Endothelial cell of umbilical vein (primary cell): ENCODE measurements at regions of chr10 and their contacts with region 1.

Region 1: DNA sequence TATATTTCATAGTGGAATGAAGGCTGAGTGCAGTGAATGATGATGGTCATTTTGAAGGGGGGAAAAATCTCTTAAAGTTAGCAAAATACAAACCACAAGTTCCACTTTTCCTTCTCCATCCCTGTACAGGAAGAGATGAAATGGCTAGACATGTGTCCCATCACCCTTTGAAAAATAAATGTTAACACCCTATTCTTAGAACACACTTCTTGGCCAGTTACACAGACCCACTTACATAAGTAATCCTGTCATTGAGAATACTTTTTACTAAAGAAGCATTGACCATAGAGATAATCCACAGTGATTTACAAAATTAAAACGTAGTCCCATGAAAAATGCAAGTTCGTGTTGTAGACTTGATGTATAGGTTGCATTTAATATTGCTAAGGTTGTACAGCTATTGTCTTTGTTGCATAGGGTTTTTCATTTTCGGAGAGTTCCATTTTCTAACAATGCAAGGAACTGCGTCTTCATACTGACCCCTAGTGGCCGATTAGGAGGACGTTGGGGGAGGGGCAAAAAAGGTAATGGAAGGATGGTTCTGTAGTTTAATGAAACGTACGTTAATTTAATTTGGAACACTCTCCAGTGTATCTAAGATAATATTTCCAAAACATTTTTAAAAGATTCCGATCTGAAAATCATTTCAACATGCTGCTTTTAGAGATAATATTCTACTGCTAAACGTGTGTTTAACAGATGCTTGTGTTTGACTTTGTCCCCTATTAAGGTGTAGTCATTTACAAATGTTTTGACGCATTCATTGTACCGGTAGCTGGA is 60.9 kb downstream of the ARMC3 start:
- DNase-seq: peak; percentile 71
- H3K4me3 ChIP-seq: no peak overlapping the region
- H3K27ac ChIP-seq: no peak overlapping the region
- H3K4me1 ChIP-seq: no peaks in the 10 kb centered on the region
- H3K27me3 ChIP-seq: peaks cover 7 to 33% of the 10 kb centered on the region in 2 experiments
- CTCF ChIP-seq: peak; percentile 69 to 77
- POLR2A ChIP-seq: no peak

Region 2: DNA sequence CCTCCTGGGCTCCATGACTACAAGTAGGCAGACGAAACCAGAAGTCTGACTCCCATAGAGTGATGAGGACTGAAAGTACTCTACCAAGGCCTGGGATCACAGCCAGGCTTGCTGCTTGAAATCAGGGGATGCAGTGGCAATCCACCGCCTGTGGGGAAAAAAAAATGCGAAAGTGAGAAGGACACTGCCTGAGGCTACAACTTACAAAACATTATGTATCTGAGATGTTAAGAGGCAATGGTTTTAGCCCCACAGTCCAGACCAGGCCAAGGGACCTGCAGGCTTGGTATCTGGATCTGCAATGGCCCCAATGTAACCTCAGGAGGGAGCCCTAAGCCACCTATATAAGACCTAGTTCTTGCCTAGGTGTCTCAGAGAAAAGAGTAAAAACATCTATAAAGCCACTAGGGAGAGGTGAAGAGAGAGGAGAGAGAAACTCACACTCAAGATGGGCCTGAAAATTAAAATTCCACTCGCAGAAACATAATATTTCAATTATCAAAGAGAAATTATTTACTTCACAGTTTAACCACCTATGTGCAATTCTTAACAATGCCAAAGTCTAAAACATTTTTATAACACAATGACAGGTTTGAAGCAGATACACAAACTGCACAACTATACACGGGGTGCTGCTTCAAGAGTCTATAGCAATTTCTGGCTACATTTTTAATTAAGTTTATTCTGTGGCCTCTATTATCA is 999.2 kb before region 1 on chr10:
- CTCF ChIA-PET with region 1: interaction called, 53 read pairs
- POLR2A ChIA-PET with region 1: no interaction called
- dilution Hi-C with region 1: no loop called
- intact Hi-C with region 1: loop called (anchors 1 kb)
- DNase-seq: peak; percentile 38
- H3K4me3 ChIP-seq: no peak overlapping the region
- H3K27ac ChIP-seq: no peak overlapping the region
- H3K4me1 ChIP-seq: no peaks in the 10 kb centered on the region
- H3K27me3 ChIP-seq: no peaks in the 10 kb centered on the region
- CTCF ChIP-seq: peak; percentile 21 to 45
- POLR2A ChIP-seq: no peak

Region 3: DNA sequence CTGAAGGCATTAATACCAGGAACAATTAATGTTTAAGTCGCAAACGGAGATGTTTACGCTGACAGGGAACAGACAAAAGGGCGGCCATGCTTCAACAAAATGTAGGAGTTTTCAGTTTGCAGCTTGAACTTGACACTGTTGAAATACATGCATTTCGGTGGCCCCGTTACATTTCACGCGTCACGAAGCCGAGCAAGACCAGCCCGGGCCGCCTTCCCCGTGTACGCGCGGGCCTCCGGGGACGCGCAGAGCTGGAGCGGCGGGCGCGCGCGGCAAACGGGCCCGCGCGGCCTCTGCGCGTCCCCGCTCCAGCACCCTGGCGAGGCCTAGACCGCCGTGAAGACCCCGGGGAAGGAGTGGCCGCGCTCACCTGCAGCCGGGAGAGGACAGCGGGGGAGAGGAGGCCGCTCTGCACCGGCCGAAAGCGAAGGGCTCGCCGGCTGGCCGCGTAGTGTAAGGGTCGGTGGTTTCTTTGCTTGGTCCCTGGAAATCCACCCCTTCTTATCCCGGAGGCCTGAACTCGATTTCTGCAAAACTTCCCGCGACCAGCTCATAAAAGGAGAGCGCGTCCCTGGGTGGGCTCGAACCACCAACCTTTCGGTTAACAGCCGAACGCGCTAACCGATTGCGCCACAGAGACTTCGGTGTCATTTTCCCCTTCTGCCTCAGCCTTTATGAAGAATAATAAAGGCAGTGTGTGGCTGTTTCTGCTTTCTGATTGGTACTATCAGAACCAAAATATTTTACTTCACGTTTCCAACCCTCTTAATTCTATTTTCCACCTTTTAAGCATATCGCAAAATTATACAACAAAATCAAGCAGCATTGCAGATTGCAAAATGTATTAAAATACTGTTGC is 759.6 kb before region 1 on chr10:
- CTCF ChIA-PET with region 1: interaction called, 7 read pairs
- POLR2A ChIA-PET with region 1: no interaction called
- dilution Hi-C with region 1: no loop called
- intact Hi-C with region 1: loop called (anchors 1 kb)
- DNase-seq: peak; percentile 94
- H3K4me3 ChIP-seq: peak overlapping the region; percentile 69 to 97 (median 96)
- H3K27ac ChIP-seq: peak overlapping the region; percentile 49
- H3K4me1 ChIP-seq: peaks cover 9% of the 10 kb centered on the region
- H3K27me3 ChIP-seq: no peaks in the 10 kb centered on the region
- CTCF ChIP-seq: no peak
- POLR2A ChIP-seq: peak; percentile 30

Region 4: DNA sequence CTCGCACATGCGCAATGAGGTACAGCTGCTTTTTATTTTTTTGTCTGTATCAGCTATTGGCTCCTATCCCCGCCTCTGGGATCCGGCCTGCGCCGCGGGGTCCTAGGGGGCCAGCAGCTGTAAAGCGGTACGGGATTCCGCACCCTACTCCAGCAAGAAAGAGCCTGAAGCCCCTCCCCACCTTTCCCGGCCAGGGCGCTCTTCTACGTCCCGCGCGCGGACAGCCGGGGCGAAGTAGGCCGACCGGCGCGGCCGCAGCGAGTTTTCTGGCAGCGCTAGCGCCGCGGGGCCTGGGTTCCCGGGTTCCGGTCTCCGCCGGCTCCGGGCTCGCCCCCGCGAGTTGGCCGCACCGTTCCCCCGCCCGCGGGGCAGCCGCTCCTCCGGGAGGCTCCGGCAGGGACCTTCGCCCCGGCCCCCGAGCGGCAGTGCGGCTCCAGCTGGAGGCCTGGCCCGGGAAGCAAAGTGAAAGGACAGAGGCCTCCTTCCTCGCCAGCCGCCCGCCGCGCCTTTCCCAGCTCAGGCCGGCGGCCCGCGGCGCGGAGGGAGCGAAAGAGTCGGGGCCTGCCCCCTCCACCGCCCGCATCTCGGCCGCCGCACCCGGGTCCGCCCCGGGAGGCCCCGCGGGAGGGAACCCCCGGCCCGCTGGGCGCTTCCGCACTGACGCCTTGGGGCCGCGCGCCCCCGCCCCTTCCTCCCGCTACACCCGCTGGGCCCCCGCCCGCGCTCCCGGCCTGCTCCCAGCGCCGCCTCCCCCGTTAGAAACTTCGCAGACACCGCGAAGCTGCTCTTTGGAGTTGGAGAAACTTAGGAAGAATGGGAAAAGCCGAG is 648.2 kb before region 1 on chr10:
- CTCF ChIA-PET with region 1: interaction called, 8 read pairs
- POLR2A ChIA-PET with region 1: no interaction called
- dilution Hi-C with region 1: no loop called
- intact Hi-C with region 1: loop called (anchors 5 kb)
- DNase-seq: peak; percentile 53
- H3K4me3 ChIP-seq: peak overlapping the region; percentile 78 to 81 (median 80)
- H3K27ac ChIP-seq: peak overlapping the region; percentile 63
- H3K4me1 ChIP-seq: peaks cover 13% of the 10 kb centered on the region
- H3K27me3 ChIP-seq: peaks cover 72 to 90% of the 10 kb centered on the region in 2 experiments
- CTCF ChIP-seq: no peak
- POLR2A ChIP-seq: peak; percentile 31

Region 5: DNA sequence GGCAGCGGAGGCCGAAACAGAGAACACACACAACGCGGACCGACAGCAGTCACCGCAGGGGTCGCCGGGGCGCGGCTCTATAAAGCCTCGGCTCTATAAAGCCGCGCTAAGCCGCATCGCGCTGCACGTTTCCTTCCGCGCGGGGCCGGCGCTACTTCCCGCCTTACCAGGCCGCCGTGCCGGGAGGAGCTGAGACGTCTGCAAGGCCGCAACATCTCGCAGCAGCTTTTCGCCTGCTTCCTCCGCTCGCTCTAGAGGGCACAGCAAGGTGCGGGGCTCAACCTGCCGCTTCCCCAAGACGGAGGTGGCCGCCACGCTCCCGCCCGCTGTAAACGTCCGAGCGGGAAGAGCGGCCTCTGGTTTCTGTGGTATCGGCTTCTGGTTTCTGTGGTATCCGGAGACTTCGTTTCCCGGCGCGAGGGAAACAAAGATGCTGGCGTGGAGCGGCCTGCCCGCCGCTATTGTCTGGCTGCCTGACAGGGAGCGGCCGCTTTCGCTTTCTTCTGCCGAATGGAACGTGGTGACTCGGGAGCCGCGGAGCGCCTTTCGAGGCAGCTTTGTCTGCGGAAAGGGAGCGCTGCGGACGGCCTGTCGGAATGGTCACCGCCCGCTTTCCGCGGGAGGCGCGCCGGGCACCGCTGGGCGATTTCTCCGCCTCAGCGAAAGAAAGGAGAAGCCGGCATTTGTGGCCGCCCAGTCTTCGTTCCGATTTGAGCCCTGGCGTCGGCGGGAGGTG is 551.7 kb before region 1 on chr10:
- CTCF ChIA-PET with region 1: interaction called, 10 read pairs
- POLR2A ChIA-PET with region 1: no interaction called
- dilution Hi-C with region 1: no loop called
- intact Hi-C with region 1: no loop called
- DNase-seq: peak; percentile 91
- H3K4me3 ChIP-seq: peak overlapping the region; percentile 66 to 74 (median 69)
- H3K27ac ChIP-seq: peak overlapping the region; percentile 94
- H3K4me1 ChIP-seq: peaks cover 27% of the 10 kb centered on the region
- H3K27me3 ChIP-seq: peaks cover 2 to 14% of the 10 kb centered on the region in 2 experiments
- CTCF ChIP-seq: peak; percentile 7 to 36
- POLR2A ChIP-seq: peak; percentile 93

Region 6: GRCh38 chr10:22714479-22715289 is 274.1 kb before region 1 on chr10 and contains the start of gene PIP4K2A:
- CTCF ChIA-PET with region 1: interaction called, 9 read pairs
- POLR2A ChIA-PET with region 1: no interaction called
- dilution Hi-C with region 1: no loop called
- intact Hi-C with region 1: loop called (anchors 5 kb)
- DNase-seq: peak; percentile 58
- H3K4me3 ChIP-seq: peak within 1 kb of the TSS; percentile 89 to 100 (median 89)
- H3K27ac ChIP-seq: peak within 1 kb of the TSS; percentile 55
- H3K4me1 ChIP-seq: peaks cover 17% of the 10 kb centered on the region
- H3K27me3 ChIP-seq: no peaks in the 10 kb centered on the region
- CTCF ChIP-seq: no peak
- POLR2A ChIP-seq: peak; percentile 74
- total RNA-seq, gene PIP4K2A: 32.6 and 35.4 TPM in 2 replicates

Region 7: GRCh38 chr10:22816298-22816653 is 172.5 kb before region 1 on chr10:
- CTCF ChIA-PET with region 1: no interaction called
- POLR2A ChIA-PET with region 1: no interaction called
- dilution Hi-C with region 1: no loop called
- intact Hi-C with region 1: no loop called
- DNase-seq: peak; percentile 93
- H3K4me3 ChIP-seq: no peak overlapping the region
- H3K27ac ChIP-seq: peak overlapping the region; percentile 86
- H3K4me1 ChIP-seq: peaks cover 15% of the 10 kb centered on the region
- H3K27me3 ChIP-seq: no peaks in the 10 kb centered on the region
- CTCF ChIP-seq: no peak
- POLR2A ChIP-seq: no peak

Region 8: GRCh38 chr10:23067939-23068775 is 79.4 kb after region 1 on chr10:
- CTCF ChIA-PET with region 1: no interaction called
- POLR2A ChIA-PET with region 1: no interaction called
- dilution Hi-C with region 1: no loop called
- intact Hi-C with region 1: no loop called
- DNase-seq: peak; percentile 65
- H3K4me3 ChIP-seq: no peak overlapping the region
- H3K27ac ChIP-seq: no peak overlapping the region
- H3K4me1 ChIP-seq: no peaks in the 10 kb centered on the region
- H3K27me3 ChIP-seq: no peaks in the 10 kb centered on the region
- CTCF ChIP-seq: peak; percentile 70 to 83
- POLR2A ChIP-seq: no peak

Region 9: DNA sequence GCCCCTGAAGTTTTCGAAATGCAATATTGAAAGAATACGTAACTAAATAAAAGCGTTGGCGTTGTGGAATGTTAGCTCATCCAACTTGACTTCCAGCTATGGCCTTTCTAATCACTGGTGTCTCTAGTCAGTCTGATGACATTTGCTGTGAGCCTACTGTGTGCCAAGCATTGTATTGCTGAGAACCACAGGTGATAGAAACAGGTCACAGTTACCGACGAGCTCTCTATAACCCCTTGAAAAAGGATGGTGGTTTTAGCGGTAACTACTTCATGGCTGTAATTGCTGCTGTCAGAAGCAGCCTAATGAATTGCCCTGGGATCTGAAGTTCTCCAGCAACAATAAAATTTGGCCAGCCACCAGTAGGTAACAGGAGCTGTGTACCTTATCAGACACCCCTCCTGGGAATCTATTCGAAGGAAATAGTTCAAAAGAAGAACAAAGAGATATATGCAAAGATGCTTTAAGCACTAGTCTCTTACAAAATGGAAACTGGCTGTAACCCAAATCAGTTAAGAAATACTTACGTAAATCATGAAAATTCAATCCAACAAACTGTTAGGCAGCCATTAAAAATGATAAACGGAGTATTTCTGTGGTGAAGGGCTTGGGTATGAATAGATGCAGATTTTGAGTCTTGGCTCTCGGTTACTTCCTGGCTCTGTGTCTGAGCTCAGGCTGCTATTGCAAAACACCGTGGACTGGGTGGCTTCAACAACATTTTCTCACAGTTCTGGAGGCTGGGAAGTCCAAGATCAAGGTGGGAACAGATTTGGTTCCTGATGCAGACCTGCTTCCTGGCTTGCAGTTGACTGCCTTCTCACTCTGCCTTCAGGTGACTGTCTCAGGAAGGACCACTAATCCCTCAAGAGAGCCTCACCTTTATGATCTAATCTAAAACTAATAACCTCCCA is 108.1 kb after region 1 on chr10:
- CTCF ChIA-PET with region 1: no interaction called
- POLR2A ChIA-PET with region 1: no interaction called
- dilution Hi-C with region 1: no loop called
- intact Hi-C with region 1: no loop called
- DNase-seq: peak; percentile 35
- H3K4me3 ChIP-seq: peak overlapping the region in 2 of 3 experiments; percentile 52 to 84
- H3K27ac ChIP-seq: no peak overlapping the region
- H3K4me1 ChIP-seq: peaks cover 21% of the 10 kb centered on the region
- H3K27me3 ChIP-seq: peaks cover under 1 to 9% of the 10 kb centered on the region in 2 experiments
- CTCF ChIP-seq: no peak
- POLR2A ChIP-seq: no peak

Region 10: DNA sequence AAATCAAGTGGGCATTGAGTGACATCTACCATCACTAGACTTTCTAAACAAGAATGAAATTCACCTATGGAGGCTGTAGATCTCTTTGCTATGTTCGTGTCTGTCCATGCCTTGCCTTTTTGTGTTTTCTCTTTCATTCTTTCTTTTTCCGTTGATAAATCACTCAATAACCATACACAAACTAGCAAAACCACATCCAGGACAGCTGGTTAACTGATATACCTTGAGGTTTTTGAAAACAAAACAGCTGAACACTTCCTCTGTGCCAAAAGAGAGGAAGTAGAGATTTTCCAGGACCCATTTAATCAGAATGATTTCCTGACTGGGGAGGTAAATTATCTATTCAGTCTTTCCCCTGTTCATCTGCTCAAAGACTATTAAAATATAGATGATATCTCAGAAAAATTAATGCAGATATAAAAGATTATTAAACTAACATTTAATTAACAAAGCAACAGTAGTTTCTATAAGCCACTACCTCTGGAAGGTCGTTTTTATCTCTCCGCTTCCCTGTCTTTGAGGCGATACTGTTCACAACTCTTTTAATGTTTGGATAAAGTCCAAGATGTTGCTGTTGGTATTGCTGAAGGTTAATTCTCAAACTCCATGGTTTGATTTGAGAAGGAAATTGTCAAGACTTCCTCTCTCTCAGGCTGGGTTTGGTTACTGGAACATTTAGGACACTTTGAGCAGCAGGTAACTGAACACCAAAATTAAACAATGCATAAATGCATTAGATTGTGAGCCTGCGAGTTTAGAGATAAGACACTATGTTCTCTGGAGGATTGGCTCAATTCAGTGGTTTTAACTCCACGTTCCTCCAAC is 380.3 kb after region 1 on chr10:
- CTCF ChIA-PET with region 1: no interaction called
- POLR2A ChIA-PET with region 1: no interaction called
- dilution Hi-C with region 1: no loop called
- intact Hi-C with region 1: no loop called
- DNase-seq: no peak
- H3K4me3 ChIP-seq: no peak overlapping the region
- H3K27ac ChIP-seq: no peak overlapping the region
- H3K4me1 ChIP-seq: no peaks in the 10 kb centered on the region
- H3K27me3 ChIP-seq: no peaks in the 10 kb centered on the region
- CTCF ChIP-seq: no peak
- POLR2A ChIP-seq: no peak